ENCODE measurements at regions of chr9 and their contacts with region 1.

Region 1: DNA sequence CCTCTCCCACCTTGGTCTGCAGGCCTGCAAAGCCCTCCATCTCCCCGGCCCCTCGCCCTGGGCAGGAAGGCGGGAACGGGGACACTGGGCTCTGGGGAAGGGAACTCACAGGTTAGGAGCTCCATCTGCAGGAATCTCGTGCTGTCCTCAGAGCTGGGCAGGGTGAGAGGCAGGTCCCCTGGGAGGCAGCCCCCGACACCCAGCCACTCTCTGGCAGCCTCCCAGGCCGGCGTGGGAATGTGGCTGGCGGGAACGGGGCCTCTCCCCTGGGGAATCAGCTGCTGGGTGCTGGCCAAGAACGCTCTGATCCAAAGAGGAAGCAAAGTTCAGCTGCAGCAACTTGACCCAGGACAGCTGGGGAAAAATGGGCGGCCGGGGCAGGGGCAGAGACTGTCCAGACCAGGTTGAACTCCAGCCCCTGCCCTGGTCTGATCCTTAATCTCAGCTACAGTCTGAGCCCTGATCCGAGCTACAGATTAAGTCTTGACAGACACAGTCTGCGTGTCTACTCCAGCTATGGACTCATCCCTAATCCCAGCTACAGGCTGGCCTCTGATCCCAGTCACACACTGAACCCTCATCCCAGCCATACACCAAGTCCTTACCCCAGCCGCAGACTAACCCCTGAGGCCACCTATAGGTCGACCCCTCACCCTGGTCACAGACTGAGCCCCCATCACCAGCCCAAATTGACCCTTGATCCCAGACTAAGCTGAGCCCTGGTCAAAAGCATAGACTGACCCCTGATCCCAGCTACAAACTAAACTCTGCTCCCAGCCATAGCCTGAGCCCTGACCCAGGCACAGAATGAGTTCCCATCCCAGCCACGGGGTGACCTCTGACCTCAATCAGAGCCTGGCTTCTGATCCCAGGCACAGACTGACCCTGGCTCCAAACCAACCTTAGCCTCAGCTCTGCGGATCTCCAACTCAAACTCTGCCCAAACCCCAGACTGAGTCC is 37.3 kb upstream of the EGFL7 start:
- DNase-seq: peak; percentile 86
- H3K4me3 ChIP-seq: no peak overlapping the region
- H3K27ac ChIP-seq: no peak overlapping the region
- H3K4me1 ChIP-seq: peaks cover 12% of the 10 kb centered on the region
- H3K27me3 ChIP-seq: no peaks in the 10 kb centered on the region
- CTCF ChIP-seq: peak; percentile 39 to 66
- POLR2A ChIP-seq: no peak

Region 2: GRCh38 chr9:136527721-136528691 is 97.4 kb before region 1 on chr9:
- CTCF ChIA-PET with region 1: interaction called, 17 read pairs
- POLR2A ChIA-PET with region 1: interaction called, 4 read pairs
- dilution Hi-C with region 1: no loop called
- intact Hi-C with region 1: no loop called
- DNase-seq: no peak
- H3K4me3 ChIP-seq: no peak overlapping the region
- H3K27ac ChIP-seq: peak overlapping the region; percentile 89
- H3K4me1 ChIP-seq: peaks cover 45% of the 10 kb centered on the region
- H3K27me3 ChIP-seq: no peaks in the 10 kb centered on the region
- CTCF ChIP-seq: no peak
- POLR2A ChIP-seq: no peak

Region 3: GRCh38 chr9:136599811-136600660 is 25.3 kb before region 1 on chr9:
- CTCF ChIA-PET with region 1: interaction called, 13 read pairs
- POLR2A ChIA-PET with region 1: no interaction called
- dilution Hi-C with region 1: no loop called
- intact Hi-C with region 1: no loop called
- DNase-seq: no peak
- H3K4me3 ChIP-seq: no peak overlapping the region
- H3K27ac ChIP-seq: no peak overlapping the region
- H3K4me1 ChIP-seq: peaks cover 5% of the 10 kb centered on the region
- H3K27me3 ChIP-seq: no peaks in the 10 kb centered on the region
- CTCF ChIP-seq: no peak
- POLR2A ChIP-seq: no peak

Region 4: DNA sequence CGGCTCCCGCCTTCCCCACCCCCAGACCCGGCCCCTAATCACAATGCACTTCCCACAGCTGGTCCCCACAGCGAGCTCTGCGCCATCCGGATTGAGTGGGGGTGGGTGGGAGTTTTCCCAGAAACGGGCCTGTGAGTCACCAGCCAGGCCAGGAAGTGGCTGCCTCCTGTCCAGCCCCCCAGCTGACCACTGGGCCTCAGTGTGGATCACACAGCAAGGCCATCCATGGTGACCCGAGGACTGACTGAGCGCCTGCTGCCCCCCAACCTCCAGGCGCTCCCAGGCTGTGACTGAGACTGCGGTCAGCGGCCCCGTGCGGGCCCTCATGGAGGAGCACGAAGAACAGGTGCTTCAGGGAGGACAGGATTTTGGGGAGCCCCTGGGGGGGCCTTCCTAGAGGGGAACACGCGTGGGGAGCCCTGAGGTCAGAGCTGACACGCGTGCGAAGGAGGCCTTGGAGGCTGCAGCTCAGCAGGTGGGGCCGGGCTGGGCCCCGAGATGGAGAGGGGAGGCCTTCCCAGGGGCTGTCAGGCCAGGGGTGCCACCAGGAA is 10.9 kb before region 1 on chr9:
- CTCF ChIA-PET with region 1: interaction called, 10 read pairs
- POLR2A ChIA-PET with region 1: interaction called, 5 read pairs
- dilution Hi-C with region 1: no loop called
- intact Hi-C with region 1: loop called (anchors 1 kb)
- DNase-seq: peak; percentile 94
- H3K4me3 ChIP-seq: no peak overlapping the region
- H3K27ac ChIP-seq: peak overlapping the region; percentile 97
- H3K4me1 ChIP-seq: peaks cover 22% of the 10 kb centered on the region
- H3K27me3 ChIP-seq: no peaks in the 10 kb centered on the region
- CTCF ChIP-seq: no peak
- POLR2A ChIP-seq: no peak

Region 5: GRCh38 chr9:136655536-136656182 is 30.3 kb after region 1 on chr9:
- CTCF ChIA-PET with region 1: no interaction called
- POLR2A ChIA-PET with region 1: no interaction called
- dilution Hi-C with region 1: no loop called
- intact Hi-C with region 1: no loop called
- DNase-seq: peak; percentile 99
- H3K4me3 ChIP-seq: no peak overlapping the region
- H3K27ac ChIP-seq: peak overlapping the region; percentile 98
- H3K4me1 ChIP-seq: peaks cover 56% of the 10 kb centered on the region
- H3K27me3 ChIP-seq: no peaks in the 10 kb centered on the region
- CTCF ChIP-seq: no peak
- POLR2A ChIP-seq: peak; percentile 87

Measured in endothelial cell of umbilical vein (primary cell).